IMR-90 (cell line): ENCODE measurements at regions of chr4 and their contacts with region 1.

Region 1: DNA sequence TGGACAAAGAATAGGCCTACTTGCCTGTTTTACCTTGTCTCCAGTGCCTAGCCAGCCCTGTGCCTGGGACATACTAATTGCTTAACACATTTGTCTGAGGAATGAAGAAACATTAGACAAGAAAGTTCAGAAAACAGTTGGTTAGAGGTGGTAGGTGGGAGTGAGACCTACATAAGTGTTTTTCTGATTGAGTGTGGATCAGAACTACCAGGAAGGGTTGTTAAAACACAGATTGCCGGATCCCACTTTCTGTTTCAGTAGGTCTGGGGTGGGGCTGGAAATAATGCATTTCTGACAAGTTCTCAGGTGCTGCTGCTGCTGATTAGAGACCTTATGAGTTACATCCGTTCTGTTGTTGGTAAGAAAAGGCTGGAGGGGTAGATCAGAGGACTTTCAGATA is 5.7 kb upstream of the JADE1 start:
- DNase-seq: no peak
- ATAC-seq: no peak
- H3K4me3 ChIP-seq: no peak overlapping the region
- H3K27ac ChIP-seq: no peak overlapping the region
- H3K4me1 ChIP-seq: no peaks in the 10 kb centered on the region
- H3K27me3 ChIP-seq: peaks cover 4% of the 10 kb centered on the region; the same call in 1 of the 2 replicates
- CTCF ChIP-seq: no peak
- POLR2A ChIP-seq: no peak
- RAD21 ChIP-seq: no peak

Region 2: GRCh38 chr4:128737098-128737513 is 66.7 kb before region 1 on chr4:
- CTCF ChIA-PET with region 1: no interaction called
- POLR2A ChIA-PET with region 1: no interaction called
- dilution Hi-C with region 1: no loop called
- in situ Hi-C with region 1: no loop called
- intact Hi-C with region 1: loop called (anchors 2 kb)
- DNase-seq: no peak
- ATAC-seq: no peak
- H3K4me3 ChIP-seq: no peak overlapping the region
- H3K27ac ChIP-seq: no peak overlapping the region
- H3K4me1 ChIP-seq: no peaks in the 10 kb centered on the region
- H3K27me3 ChIP-seq: no peaks in the 10 kb centered on the region
- CTCF ChIP-seq: no peak
- POLR2A ChIP-seq: no peak
- RAD21 ChIP-seq: no peak